ENCODE measurements at regions of chr3 and their contacts with region 1.

Region 1: GRCh38 chr3:45942051-45942825 is 1.0 kb upstream of the CXCR6 start:
- DNase-seq: no peak
- CTCF ChIP-seq: no peak

Region 2: GRCh38 chr3:46078712-46079400 is 136.6 kb after region 1 on chr3:
- in situ Hi-C with region 1: loop called (anchors 5 kb)
- DNase-seq: peak; percentile 65
- CTCF ChIP-seq: peak; percentile 98

Region 3: DNA sequence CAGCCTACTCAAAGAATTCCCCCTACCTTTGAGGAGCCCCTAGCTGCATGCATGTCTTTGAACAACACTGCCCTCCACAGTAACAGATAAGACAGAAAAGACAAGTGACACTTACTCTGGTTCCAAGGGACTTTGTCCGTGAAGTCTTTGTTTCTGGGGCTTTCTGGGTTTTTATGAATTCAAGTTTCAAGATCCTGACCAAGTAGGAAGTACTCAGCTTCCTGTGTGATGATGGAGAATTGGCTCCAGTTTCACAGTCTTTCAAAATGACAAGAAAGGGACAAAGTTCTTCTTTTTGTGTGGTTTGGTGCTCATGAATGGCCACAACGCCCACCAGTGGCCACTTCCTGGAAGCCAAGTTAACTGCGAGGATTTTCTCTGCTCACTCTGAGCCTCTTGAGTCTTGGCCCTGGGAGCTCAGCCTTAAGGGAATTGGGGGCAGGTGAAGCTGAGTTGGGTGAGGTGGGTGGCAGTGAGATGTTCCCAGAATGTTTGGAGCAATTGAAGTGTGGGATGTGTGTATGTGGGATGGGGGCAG is 266.0 kb after region 1 on chr3 and contains the start of gene CCR1:
- in situ Hi-C with region 1: loop called (anchors 10 kb)
- DNase-seq: peak; percentile 55
- CTCF ChIP-seq: peak; percentile 57

Region 4: DNA sequence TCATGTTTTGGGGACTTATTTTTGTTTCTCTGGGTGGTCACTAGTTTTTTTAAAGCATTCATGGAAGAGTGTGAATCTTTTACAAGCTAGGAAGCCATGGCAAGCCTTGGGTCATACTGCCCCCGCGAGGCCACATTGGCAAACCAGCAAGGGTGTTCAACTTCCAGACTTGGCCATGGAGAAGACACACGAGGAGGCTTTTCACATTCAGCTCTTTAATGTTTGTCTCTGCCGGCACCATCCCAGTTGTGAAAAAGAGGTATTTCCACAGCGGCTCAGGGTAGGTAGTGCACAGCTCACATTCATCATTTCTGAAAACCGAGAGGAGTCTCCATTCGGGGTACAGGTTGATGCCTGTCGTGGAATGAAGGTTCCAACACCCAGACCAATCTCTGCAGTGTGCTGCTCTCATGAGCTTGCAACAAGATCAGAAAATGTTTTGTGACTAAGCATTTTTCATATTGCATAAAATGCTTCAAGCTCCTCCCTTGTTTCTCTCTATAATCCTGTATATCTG is 436.2 kb after region 1 on chr3:
- in situ Hi-C with region 1: loop called (anchors 10 kb)
- DNase-seq: peak; percentile 59
- CTCF ChIP-seq: peak; percentile 68